ENCODE measurements at regions of chr3 and their contacts with region 1.

Region 1: GRCh38 chr3:12907729-12908128 is 66.4 kb upstream of the RPL32 start:
- DNase-seq: no peak

Region 2: GRCh38 chr3:12719984-12720898 is 187.5 kb before region 1 on chr3:
- intact Hi-C with region 1: no loop called
- DNase-seq: peak; percentile 89

Region 3: DNA sequence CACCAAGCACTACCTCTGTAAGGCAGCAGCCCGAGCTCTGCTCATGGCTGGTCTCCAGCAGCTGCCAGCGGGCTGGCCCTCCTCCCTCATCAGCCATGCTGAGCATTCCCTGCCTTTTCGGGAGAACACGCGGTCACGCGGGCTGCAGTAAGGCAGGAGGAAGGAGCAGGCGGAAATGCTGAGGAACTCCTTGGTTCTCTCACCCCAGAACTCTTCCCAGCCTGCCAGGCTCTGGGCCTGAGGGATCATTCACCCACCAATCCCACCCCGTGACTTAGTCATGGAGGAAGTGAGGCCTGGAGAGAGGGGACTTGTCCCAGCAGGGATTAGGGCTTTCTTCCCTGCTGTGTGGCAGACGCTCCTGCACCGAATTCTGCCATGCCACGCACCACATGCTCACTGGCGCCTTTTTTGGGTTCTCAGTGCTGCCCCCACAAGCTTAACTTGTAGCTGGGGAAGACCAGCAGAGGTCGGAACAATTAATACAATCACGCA is 23.5 kb before region 1 on chr3:
- intact Hi-C with region 1: loop called in 1 of 2 experiments (anchors 2 kb)
- DNase-seq: no peak